Ascending aorta (tissue), 2 donors: ENCODE measurements at regions of chr22 and their contacts with region 1.

Region 1: GRCh38 chr22:44351685-44352377 is 39.1 kb upstream of the SHISAL1 start:
- DNase-seq: peak in 1 of 2 donors; percentile 80
- H3K4me3 ChIP-seq: no peak overlapping the region
- H3K27ac ChIP-seq: no peak overlapping the region
- H3K4me1 ChIP-seq: no peaks in the 10 kb centered on the region
- H3K27me3 ChIP-seq: no peaks in the 10 kb centered on the region
- CTCF ChIP-seq: no peak

Region 2: DNA sequence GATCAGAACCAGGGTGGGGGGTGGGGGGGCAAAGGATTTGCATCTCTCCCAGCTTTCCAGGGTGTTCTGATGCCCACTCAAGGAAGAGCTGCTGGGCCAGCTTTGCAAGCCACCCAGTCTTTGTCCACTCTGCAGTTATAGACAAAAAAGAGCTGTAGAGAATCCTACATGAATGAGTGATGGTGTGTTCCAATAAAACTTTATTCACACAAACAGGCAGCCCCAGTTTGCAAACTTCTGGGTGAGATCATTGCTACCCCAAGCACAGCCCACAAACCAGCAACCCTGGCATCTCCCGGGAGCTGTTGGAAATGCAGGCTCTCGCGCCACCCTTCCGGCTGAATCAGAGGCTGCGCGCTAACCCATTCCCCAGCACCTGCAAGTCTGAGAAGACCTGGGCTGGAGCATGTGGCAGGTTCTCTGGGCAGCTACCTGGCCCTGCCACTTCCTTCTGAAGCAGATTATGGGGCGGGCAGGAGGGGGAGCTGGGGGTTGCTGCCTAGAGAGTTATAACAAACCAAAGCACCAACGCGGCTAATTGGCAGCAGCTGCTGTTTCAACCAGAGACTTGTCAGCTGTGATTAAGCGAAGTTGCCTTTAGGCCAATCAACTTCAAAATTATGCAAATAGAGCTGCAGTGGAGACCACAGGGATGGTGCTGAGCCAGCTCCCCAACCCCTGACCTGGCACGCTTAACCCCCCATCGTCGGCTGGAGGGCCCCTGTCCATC is 35.3 kb before region 1 on chr22:
- intact Hi-C with region 1: no loop called
- DNase-seq: no peak
- H3K4me3 ChIP-seq: no peak overlapping the region
- H3K27ac ChIP-seq: no peak overlapping the region
- H3K4me1 ChIP-seq: no peaks in the 10 kb centered on the region
- H3K27me3 ChIP-seq: no peaks in the 10 kb centered on the region
- CTCF ChIP-seq: no peak

Region 3: GRCh38 chr22:44337678-44338004 is 14.2 kb before region 1 on chr22:
- intact Hi-C with region 1: loop called (anchors 2 kb)
- DNase-seq: peak in 1 of 2 donors; percentile 72
- H3K4me3 ChIP-seq: no peak overlapping the region
- H3K27ac ChIP-seq: no peak overlapping the region
- H3K4me1 ChIP-seq: peaks cover 13 to 29% of the 10 kb centered on the region in 2 donors
- H3K27me3 ChIP-seq: no peaks in the 10 kb centered on the region
- CTCF ChIP-seq: no peak

Region 4: DNA sequence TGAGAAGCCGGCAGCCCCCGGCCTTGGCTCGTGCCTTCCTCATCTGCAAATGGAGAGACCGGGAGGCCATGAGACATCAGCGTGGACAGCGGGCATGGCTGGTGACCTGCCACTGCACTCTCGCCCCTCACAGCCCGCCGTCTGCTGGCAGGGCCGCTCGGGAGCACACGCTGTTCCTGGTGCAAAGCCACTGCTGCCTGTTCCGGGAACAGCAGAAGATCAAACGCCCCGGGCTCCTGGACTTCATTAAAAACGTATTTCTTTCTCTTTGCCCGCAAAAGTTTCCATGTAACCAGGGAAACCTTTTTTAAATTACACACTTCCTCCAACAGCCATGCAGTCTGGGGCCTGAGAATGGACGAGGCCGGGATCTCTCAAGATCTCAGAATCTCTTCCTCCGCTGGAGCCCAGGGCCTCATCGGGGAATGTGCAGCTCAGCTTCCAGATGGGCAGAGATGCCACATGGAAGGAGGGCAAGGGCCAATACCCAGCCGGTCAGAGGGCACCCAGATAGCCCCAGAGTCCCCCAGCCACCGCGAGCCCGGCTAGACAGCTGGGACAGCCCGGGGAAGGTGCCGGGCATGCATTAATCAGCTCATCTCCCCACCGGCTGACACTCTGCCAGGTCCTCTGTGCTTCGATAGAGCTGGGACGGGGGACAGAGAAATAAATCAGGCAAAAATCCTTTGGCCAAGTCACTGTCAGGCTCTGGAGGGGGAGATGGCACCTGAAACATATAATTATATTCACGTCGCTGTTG is 287.4 kb after region 1 on chr22:
- intact Hi-C with region 1: no loop called
- DNase-seq: no peak
- H3K4me3 ChIP-seq: no peak overlapping the region
- H3K27ac ChIP-seq: peak overlapping the region; percentile 18 to 73
- H3K4me1 ChIP-seq: no peaks in the 10 kb centered on the region
- H3K27me3 ChIP-seq: no peaks in the 10 kb centered on the region
- CTCF ChIP-seq: no peak